T-cell (primary cell): ENCODE measurements at regions of chr7 and their contacts with region 1.

Region 1: GRCh38 chr7:101294039-101294831 is 27.4 kb downstream of the IFT22 start:
- DNase-seq: no peak
- ATAC-seq: no peak
- H3K4me3 ChIP-seq: no peak overlapping the region
- H3K4me3 Mint-ChIP-seq: no peak overlapping the region
- H3K27ac ChIP-seq: no peak overlapping the region
- H3K27ac Mint-ChIP-seq: no peak overlapping the region
- H3K4me1 ChIP-seq: peaks cover 0 to 8% of the 10 kb centered on the region in 2 experiments
- H3K4me1 Mint-ChIP-seq: peaks cover 6 to 13% (median 12%) of the 10 kb centered on the region in 3 donors
- H3K27me3 ChIP-seq: peaks cover 6 to 78% of the 10 kb centered on the region in 2 experiments
- H3K27me3 Mint-ChIP-seq: peaks cover 48 to 71% of the 10 kb centered on the region in 2 donors

Region 2: GRCh38 chr7:100736671-100737070 is 557.6 kb before region 1 on chr7:
- CTCF ChIA-PET with region 1: interaction called in 1 of 2 experiments, 11 read pairs
- POLR2A ChIA-PET with region 1: no interaction called
- DNase-seq: no peak
- ATAC-seq: no peak
- H3K4me3 ChIP-seq: no peak overlapping the region
- H3K4me3 Mint-ChIP-seq: no peak overlapping the region
- H3K27ac ChIP-seq: no peak overlapping the region
- H3K27ac Mint-ChIP-seq: no peak overlapping the region
- H3K4me1 ChIP-seq: no peaks in the 10 kb centered on the region
- H3K4me1 Mint-ChIP-seq: peaks cover 2 to 7% (median 5%) of the 10 kb centered on the region in 3 donors
- H3K27me3 ChIP-seq: peaks cover 0 to 25% of the 10 kb centered on the region in 2 experiments
- H3K27me3 Mint-ChIP-seq: peaks cover 0 to 18% of the 10 kb centered on the region in 2 donors

Region 3: DNA sequence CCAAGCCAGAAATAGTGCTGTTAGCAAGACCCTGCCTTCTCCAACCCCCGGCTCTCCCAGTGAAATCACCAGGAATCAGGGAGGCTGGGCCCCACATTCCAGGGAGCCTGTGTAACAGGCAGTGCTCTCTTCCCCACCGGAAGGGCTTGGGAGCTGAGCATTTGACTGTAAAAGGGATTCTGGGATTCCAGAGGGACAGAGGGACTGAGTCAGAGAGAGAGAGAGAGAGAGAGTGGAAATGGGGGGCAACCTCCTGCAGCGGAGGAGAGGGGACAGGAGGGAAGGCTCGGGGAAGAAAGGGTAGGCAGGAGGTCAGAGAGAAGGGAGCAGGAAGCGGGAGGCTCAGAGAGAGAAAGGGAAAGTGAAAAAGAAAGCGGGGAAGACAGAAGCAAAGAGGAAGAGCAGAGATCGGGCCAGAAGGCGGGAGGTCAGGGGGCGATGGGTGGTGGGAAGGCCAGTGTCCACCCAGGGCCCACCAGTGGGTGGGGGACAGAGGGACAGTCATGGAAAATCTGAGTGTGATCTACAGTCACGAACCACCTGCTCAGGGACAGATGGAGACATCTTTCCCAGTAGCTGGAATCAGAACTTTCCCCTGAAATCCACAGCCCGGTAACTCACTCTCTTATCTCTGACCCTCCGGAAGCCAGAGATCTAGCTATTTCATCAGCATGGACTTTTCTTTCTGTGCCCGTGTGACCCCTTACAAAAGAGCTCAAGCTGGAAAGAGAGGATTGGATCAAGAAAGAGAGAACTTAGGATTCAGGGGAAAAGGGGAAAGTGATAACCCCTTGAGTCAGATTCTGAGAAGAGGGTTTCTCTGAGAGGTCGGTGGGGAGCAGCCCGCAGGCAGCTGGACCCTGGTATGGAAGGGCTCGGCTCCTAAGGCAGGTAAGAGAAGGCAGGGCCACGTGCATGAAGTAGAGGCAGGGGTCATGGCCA is 172.0 kb before region 1 on chr7:
- CTCF ChIA-PET with region 1: no interaction called
- POLR2A ChIA-PET with region 1: no interaction called
- DNase-seq: no peak
- ATAC-seq: no peak
- H3K4me3 ChIP-seq: no peak overlapping the region
- H3K4me3 Mint-ChIP-seq: peak overlapping the region in 2 of 3 donors; percentile 21 to 58
- H3K27ac ChIP-seq: no peak overlapping the region
- H3K27ac Mint-ChIP-seq: peak overlapping the region in 1 of 2 donors; percentile 5
- H3K4me1 ChIP-seq: peaks cover 3 to 20% of the 10 kb centered on the region in 2 experiments
- H3K4me1 Mint-ChIP-seq: peaks cover 31 to 37% (median 33%) of the 10 kb centered on the region in 3 donors
- H3K27me3 ChIP-seq: peaks cover 2 to 86% of the 10 kb centered on the region in 2 experiments
- H3K27me3 Mint-ChIP-seq: peaks cover 36 to 68% of the 10 kb centered on the region in 2 donors

Region 4: GRCh38 chr7:101315336-101315735 is 21.1 kb after region 1 on chr7:
- CTCF ChIA-PET with region 1: no interaction called
- POLR2A ChIA-PET with region 1: no interaction called
- DNase-seq: peak in 26 of 35 experiments; percentile 13 to 73 (median 34)
- ATAC-seq: peak in 1 of 4 experiments; percentile 39
- H3K4me3 ChIP-seq: no peak overlapping the region
- H3K4me3 Mint-ChIP-seq: no peak overlapping the region
- H3K27ac ChIP-seq: no peak overlapping the region
- H3K27ac Mint-ChIP-seq: no peak overlapping the region
- H3K4me1 ChIP-seq: no peaks in the 10 kb centered on the region
- H3K4me1 Mint-ChIP-seq: no peaks in the 10 kb centered on the region
- H3K27me3 ChIP-seq: peaks cover 0 to 7% of the 10 kb centered on the region in 2 experiments
- H3K27me3 Mint-ChIP-seq: peaks cover 2 to 4% of the 10 kb centered on the region in 2 donors

Region 5: DNA sequence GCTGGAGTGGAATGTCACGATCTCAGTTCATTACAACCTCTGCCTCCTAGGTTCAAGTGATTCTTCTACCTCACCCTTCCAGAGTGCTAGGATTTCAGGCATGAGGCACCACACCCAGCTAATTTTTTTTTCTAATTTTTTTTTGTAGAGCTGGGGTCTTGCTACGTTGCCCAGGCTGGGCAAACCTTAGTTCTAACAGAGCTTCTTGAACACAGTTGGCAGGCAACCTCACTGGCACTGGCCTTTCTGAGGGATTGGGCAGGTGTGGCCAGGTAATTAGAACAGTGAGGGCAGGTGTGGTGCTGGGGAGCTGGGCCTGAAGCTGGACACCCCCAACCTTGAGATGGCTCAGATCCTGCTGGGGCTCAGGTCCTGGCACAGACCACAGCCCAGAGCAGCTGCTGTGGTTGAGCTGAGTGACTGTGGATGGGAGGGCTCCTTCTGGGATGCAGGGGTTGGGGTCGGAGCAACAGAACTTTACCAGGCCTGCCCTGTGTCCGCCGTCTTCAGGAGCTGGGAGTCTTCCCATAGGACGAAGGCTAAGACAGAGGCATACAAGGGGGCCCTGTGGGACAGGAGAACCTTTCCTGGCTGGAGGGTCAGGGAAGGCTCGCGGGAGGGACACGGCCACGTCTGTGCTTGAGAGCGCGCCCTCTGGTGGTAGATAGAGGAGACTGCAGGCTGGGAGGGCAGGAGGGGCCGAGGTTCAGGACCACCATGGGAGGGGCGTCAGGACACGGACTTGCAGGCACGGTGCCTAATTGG is 116.7 kb after region 1 on chr7:
- CTCF ChIA-PET with region 1: no interaction called
- POLR2A ChIA-PET with region 1: no interaction called
- DNase-seq: peak in 30 of 35 experiments; percentile 4 to 59 (median 23)
- ATAC-seq: peak in 3 of 4 experiments; percentile 39 to 59 (median 55)
- H3K4me3 ChIP-seq: no peak overlapping the region
- H3K4me3 Mint-ChIP-seq: peak overlapping the region in 1 of 3 donors; percentile 39
- H3K27ac ChIP-seq: no peak overlapping the region
- H3K27ac Mint-ChIP-seq: peak overlapping the region in 1 of 2 donors; percentile 14
- H3K4me1 ChIP-seq: peaks cover 0 to 8% of the 10 kb centered on the region in 2 experiments
- H3K4me1 Mint-ChIP-seq: peaks cover 7 to 11% (median 8%) of the 10 kb centered on the region in 3 donors
- H3K27me3 ChIP-seq: peaks cover 0 to 20% of the 10 kb centered on the region in 2 experiments
- H3K27me3 Mint-ChIP-seq: peaks cover 9 to 20% of the 10 kb centered on the region in 2 donors

Region 6: GRCh38 chr7:101669307-101669706 is 375.1 kb after region 1 on chr7:
- CTCF ChIA-PET with region 1: no interaction called
- POLR2A ChIA-PET with region 1: no interaction called
- DNase-seq: peak in 1 of 35 experiments; percentile 8
- ATAC-seq: no peak
- H3K4me3 ChIP-seq: no peak overlapping the region
- H3K4me3 Mint-ChIP-seq: no peak overlapping the region
- H3K27ac ChIP-seq: no peak overlapping the region
- H3K27ac Mint-ChIP-seq: no peak overlapping the region
- H3K4me1 ChIP-seq: no peaks in the 10 kb centered on the region
- H3K4me1 Mint-ChIP-seq: no peaks in the 10 kb centered on the region
- H3K27me3 ChIP-seq: peaks cover 0 to 16% of the 10 kb centered on the region in 2 experiments
- H3K27me3 Mint-ChIP-seq: peaks cover 0 to 2% of the 10 kb centered on the region in 2 donors